Body of pancreas (tissue), 4 donors: ENCODE measurements at regions of chr18 and their contacts with region 1.

Region 1: GRCh38 chr18:11943551-11943950 is 35.4 kb upstream of the MPPE1 start:
- DNase-seq: no peak
- ATAC-seq: no peak
- H3K4me3 ChIP-seq: no peak overlapping the region
- H3K27ac ChIP-seq: no peak overlapping the region
- H3K4me1 ChIP-seq: peaks cover 31% of the 10 kb centered on the region
- H3K27me3 ChIP-seq: no peaks in the 10 kb centered on the region
- CTCF ChIP-seq: no peak
- POLR2A ChIP-seq: no peak

Region 2: DNA sequence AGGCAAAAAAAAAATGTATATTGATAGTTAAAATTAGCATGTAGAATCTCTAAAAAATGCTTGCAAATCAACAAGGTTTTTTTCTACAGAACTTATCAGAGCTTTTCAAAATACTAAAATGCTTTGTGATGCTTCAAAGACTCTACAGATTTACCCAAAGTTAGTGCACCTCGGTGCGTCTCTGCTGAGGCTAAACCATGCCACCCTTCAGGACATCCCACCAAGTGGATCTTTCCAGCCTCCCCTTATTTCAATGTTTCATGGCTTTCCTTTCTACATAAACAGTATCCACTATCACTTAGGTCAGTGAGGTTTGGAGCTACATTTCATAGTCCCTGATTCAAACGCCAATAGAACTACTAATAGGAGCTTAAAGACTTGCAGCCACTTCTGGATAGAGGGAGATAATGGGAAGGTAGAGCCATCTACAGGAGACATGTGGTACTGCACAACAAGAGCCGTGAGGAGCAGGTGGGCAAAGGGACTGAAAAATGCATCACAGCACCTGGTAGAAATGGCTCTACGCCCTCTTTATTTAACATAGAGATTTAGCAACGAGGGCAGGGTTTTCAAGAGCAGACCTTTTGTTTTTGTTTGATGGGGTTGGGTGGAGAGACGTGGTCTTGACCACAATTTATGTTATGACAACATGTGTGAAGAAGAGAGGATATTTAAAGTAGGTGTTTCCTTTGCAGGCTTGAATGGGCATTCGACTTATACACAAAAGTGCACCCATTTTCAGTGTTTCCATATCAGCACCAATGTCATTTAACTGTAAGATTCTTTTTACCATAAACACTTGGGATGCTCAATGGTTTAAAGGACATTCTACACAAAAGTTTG is 390.2 kb before region 1 on chr18:
- intact Hi-C with region 1: no loop called
- DNase-seq: peak; percentile 25 to 41 (median 40)
- ATAC-seq: no peak
- H3K4me3 ChIP-seq: no peak overlapping the region
- H3K27ac ChIP-seq: no peak overlapping the region
- H3K4me1 ChIP-seq: no peaks in the 10 kb centered on the region
- H3K27me3 ChIP-seq: no peaks in the 10 kb centered on the region
- CTCF ChIP-seq: peak; percentile 48 to 90 (median 72)
- POLR2A ChIP-seq: no peak

Region 3: GRCh38 chr18:11840493-11840892 is 103.1 kb before region 1 on chr18:
- intact Hi-C with region 1: no loop called
- DNase-seq: no peak
- ATAC-seq: no peak
- H3K4me3 ChIP-seq: no peak overlapping the region
- H3K27ac ChIP-seq: no peak overlapping the region
- H3K4me1 ChIP-seq: no peaks in the 10 kb centered on the region
- H3K27me3 ChIP-seq: no peaks in the 10 kb centered on the region
- CTCF ChIP-seq: no peak
- POLR2A ChIP-seq: no peak

Region 4: DNA sequence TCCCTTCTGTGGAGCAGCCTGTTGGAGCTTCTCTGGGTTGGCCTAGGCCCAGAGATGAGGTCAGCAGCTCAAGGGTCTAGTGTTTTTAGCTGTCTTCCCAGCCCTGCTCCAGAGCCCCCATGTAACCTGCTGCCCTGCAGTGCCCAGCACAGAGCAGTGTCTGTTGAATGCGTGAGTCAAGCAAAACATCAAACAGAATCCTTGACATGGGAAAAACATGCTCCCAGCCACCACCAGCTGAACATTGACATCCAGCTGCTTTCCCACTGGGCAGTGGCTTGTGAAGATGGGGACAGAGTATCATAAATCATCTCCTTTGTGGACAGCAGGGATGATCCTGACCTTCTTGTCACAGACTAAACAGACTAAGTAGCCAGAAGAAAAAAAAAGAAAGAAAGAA is 60.3 kb after region 1 on chr18:
- intact Hi-C with region 1: loop called (anchors 5 kb)
- DNase-seq: peak in 1 of 4 donors; percentile 24
- ATAC-seq: no peak
- H3K4me3 ChIP-seq: no peak overlapping the region
- H3K27ac ChIP-seq: peak overlapping the region; percentile 67 to 98 (median 94)
- H3K4me1 ChIP-seq: peaks cover 97% of the 10 kb centered on the region
- H3K27me3 ChIP-seq: no peaks in the 10 kb centered on the region
- CTCF ChIP-seq: no peak
- POLR2A ChIP-seq: no peak